ENCODE measurements at regions of chr4 and their contacts with region 1.

Region 1: DNA sequence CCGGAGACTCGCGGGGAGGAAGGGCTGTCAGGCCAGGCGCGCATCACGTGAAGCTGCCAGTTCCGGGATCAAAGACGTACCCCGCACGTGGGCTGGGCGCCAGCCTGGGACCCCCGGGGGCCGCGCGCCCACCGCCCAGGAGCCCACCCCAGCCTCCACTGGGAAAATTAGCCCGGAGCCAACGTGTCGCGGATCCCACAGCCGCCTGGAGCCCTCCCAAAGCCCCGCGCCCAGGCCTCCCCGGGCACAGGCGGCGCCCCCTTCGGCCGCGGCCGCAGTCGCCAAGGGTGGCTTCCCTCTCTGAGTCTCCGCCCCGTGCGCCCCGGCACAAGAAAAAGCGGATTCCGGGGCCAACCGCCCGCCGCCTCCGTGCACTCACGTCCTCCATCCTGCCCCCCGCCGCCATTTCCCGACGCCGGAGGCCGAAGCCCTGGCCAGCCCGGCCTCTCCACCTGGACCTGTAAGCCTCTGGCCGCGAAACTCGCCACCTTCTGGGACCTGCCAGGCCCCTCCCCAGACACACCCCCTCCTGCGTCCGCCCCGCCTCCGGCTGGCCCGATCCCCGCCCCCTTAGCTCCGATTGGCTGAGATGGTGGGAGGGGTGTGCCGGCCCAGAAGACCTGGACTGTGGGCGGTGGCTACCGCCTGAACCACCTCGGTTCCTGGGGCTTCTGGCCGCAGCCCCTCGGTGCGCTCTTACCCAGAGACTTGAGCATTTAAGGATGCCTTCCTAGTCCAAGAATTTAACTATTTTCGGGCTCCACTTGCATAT is at the start of gene TMEM192:
- DNase-seq: peak; percentile 90 to 95 (median 91)
- H3K4me3 ChIP-seq: peak within 1 kb of the TSS; percentile 70 to 89
- H3K4me3 Mint-ChIP-seq: peak within 1 kb of the TSS; percentile 86 to 98 (median 92)
- H3K27ac ChIP-seq: peak within 1 kb of the TSS; percentile 74
- H3K27ac Mint-ChIP-seq: peak within 1 kb of the TSS; percentile 84 to 97 (median 95)
- H3K4me1 ChIP-seq: peaks cover 19% of the 10 kb centered on the region
- H3K4me1 Mint-ChIP-seq: peaks cover 12 to 27% (median 17%) of the 10 kb centered on the region in 4 donors
- H3K27me3 ChIP-seq: no peaks in the 10 kb centered on the region
- H3K27me3 Mint-ChIP-seq: peaks cover 0 to 2% of the 10 kb centered on the region in 2 donors
- total RNA-seq, gene TMEM192: 11.5 to 11.6 TPM

Region 2: DNA sequence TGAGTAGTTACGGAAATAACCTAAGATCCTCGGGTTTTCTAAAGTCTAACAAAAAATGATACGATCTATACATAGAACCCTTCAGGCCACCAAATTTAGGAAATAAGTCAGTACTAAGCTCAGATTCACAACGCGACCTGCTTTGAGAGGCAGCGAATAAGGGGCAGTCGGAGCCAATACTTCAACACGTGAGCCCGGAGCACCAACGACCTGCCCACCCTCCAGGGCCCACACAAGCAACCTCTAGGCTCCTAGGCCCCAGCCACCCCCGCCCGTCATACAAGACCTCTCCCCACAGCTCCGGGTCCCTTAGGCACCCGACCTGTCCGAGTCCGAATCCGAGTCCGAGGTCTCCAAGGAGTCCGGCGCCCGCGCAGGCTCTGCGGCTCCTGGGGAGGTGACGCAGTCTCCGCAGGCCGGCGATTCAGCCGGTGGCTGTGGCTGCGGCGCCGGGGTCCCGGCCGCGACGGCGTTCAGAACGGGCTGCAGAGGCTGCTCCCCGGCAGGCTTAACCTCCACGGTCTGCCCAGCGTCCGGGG is 1946.4 kb before region 1 on chr4:
- CTCF ChIA-PET with region 1: no interaction called
- POLR2A ChIA-PET with region 1: no interaction called
- intact Hi-C with region 1: loop called (anchors 1 kb)
- DNase-seq: peak; percentile 66 to 76 (median 68)
- H3K4me3 ChIP-seq: peak overlapping the region; percentile 66 to 80
- H3K4me3 Mint-ChIP-seq: peak overlapping the region; percentile 83 to 97 (median 95)
- H3K27ac ChIP-seq: peak overlapping the region; percentile 90
- H3K27ac Mint-ChIP-seq: peak overlapping the region; percentile 83 to 99 (median 99)
- H3K4me1 ChIP-seq: peaks cover 37% of the 10 kb centered on the region
- H3K4me1 Mint-ChIP-seq: peaks cover 34 to 50% (median 41%) of the 10 kb centered on the region in 4 donors
- H3K27me3 ChIP-seq: no peaks in the 10 kb centered on the region
- H3K27me3 Mint-ChIP-seq: no peaks in the 10 kb centered on the region

Region 3: GRCh38 chr4:164345756-164346155 is 766.8 kb before region 1 on chr4:
- CTCF ChIA-PET with region 1: no interaction called
- POLR2A ChIA-PET with region 1: no interaction called
- intact Hi-C with region 1: no loop called
- DNase-seq: no peak
- H3K4me3 ChIP-seq: no peak overlapping the region
- H3K4me3 Mint-ChIP-seq: no peak overlapping the region
- H3K27ac ChIP-seq: no peak overlapping the region
- H3K27ac Mint-ChIP-seq: no peak overlapping the region
- H3K4me1 ChIP-seq: no peaks in the 10 kb centered on the region
- H3K4me1 Mint-ChIP-seq: no peaks in the 10 kb centered on the region
- H3K27me3 ChIP-seq: no peaks in the 10 kb centered on the region
- H3K27me3 Mint-ChIP-seq: no peaks in the 10 kb centered on the region

Region 4: GRCh38 chr4:165096776-165097175 is 15.8 kb before region 1 on chr4:
- CTCF ChIA-PET with region 1: interaction called, 21 read pairs
- POLR2A ChIA-PET with region 1: no interaction called
- intact Hi-C with region 1: no loop called
- DNase-seq: peak in 1 of 5 donors; percentile 8
- H3K4me3 ChIP-seq: no peak overlapping the region
- H3K4me3 Mint-ChIP-seq: no peak overlapping the region
- H3K27ac ChIP-seq: no peak overlapping the region
- H3K27ac Mint-ChIP-seq: no peak overlapping the region
- H3K4me1 ChIP-seq: no peaks in the 10 kb centered on the region
- H3K4me1 Mint-ChIP-seq: no peaks in the 10 kb centered on the region
- H3K27me3 ChIP-seq: no peaks in the 10 kb centered on the region
- H3K27me3 Mint-ChIP-seq: no peaks in the 10 kb centered on the region

Region 5: DNA sequence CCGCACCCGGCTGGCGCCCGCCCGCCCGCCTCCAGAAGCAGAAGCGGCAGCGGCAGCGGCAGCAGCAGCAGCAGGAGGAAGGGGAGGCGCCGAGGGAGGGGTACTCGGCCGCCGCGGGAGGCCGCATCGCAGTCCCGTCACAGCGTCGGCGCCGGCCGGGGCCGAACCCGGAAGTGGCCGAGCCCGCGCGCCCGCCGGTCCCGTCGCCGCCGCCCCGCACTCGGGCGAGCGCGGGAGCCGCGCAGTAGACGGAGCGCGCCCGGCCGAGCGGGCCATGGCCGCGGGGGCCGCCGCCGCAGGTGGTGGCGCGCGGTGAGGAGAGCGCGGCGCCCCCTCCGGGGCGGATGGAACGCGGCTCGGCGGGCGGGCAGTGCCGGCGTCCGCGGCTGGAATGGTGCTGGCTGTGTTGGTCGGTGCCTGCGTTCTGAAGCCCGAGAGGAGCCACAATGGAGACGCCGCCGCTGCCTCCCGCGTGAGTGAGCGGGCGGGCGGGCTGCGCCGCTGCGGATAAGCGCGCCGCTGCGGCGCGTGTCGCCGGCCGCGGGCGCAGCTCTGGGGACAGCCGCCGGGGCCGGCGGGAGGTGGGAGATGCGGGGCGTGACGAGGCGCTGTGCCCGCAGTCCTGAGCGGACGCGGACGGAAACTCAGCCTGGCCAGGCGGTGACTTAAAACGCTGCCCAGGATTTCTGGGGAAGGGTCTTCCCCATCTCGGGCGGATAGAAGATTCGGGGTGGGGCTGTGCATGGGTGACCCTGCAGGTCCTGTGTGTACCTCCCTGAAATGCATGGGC is 95.1 kb after region 1 on chr4 and contains the start of gene KLHL2:
- CTCF ChIA-PET with region 1: interaction called, 7 read pairs
- POLR2A ChIA-PET with region 1: interaction called, 7 read pairs
- intact Hi-C with region 1: loop called (anchors 1 kb)
- DNase-seq: peak; percentile 66 to 76 (median 66)
- H3K4me3 ChIP-seq: peak within 1 kb of the TSS; percentile 49 to 89
- H3K4me3 Mint-ChIP-seq: peak within 1 kb of the TSS; percentile 94 to 98 (median 96)
- H3K27ac ChIP-seq: peak within 1 kb of the TSS; percentile 50
- H3K27ac Mint-ChIP-seq: peak within 1 kb of the TSS; percentile 86 to 97 (median 93)
- H3K4me1 ChIP-seq: peaks cover 38% of the 10 kb centered on the region
- H3K4me1 Mint-ChIP-seq: peaks cover 42 to 64% (median 50%) of the 10 kb centered on the region in 4 donors
- H3K27me3 ChIP-seq: no peaks in the 10 kb centered on the region
- H3K27me3 Mint-ChIP-seq: no peaks in the 10 kb centered on the region
- total RNA-seq, gene KLHL2: 18.4 to 19.3 TPM

Region 6: GRCh38 chr4:165332502-165332901 is 219.9 kb after region 1 on chr4:
- CTCF ChIA-PET with region 1: interaction called, 19 read pairs
- POLR2A ChIA-PET with region 1: interaction called, 27 read pairs
- intact Hi-C with region 1: loop called (anchors 1 kb)
- DNase-seq: no peak
- H3K4me3 ChIP-seq: no peak overlapping the region
- H3K4me3 Mint-ChIP-seq: no peak overlapping the region
- H3K27ac ChIP-seq: no peak overlapping the region
- H3K27ac Mint-ChIP-seq: peak overlapping the region in 4 of 7 donors; percentile 6 to 74 (median 34)
- H3K4me1 ChIP-seq: peaks cover 46% of the 10 kb centered on the region
- H3K4me1 Mint-ChIP-seq: peaks cover 24 to 40% (median 30%) of the 10 kb centered on the region in 4 donors
- H3K27me3 ChIP-seq: no peaks in the 10 kb centered on the region
- H3K27me3 Mint-ChIP-seq: no peaks in the 10 kb centered on the region

Measured in CD4-positive, alpha-beta memory T cell (primary cell).